GM10248 (cell line): ENCODE measurements at regions of chr1 and their contacts with region 1.

Region 1: GRCh38 chr1:154863315-154864174 is 6.5 kb downstream of the KCNN3 start:
- DNase-seq: peak; percentile 73
- CTCF ChIP-seq: peak; percentile 80

Region 2: DNA sequence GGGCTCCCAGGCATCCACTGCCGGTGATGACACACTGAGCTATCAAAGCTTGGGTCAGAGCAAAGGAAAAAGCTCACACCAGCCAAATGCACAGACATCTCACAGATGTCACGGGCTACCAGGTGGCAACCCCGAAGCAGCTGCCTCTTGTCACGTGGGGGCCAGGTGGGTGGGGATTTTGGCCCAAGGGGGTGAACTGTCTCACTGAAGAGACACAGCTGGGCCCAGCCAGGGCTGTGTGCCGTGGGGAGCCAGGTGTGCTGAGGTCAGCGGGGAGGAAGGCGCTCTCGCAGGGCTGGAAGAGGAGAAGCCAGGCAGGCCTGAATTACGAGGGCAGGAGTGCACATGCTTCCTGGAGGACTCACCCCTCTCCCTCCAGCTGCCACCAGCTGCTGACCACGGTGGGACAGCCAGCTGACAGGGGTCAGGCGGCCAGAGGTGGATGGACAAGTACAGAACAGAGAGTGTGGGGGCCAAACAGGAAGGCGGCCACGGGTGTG is 25.8 kb before region 1 on chr1:
- CTCF ChIA-PET with region 1: interaction called, 11 read pairs
- POLR2A ChIA-PET with region 1: interaction called, 3 read pairs
- DNase-seq: peak; percentile 70
- CTCF ChIP-seq: no peak

Region 3: DNA sequence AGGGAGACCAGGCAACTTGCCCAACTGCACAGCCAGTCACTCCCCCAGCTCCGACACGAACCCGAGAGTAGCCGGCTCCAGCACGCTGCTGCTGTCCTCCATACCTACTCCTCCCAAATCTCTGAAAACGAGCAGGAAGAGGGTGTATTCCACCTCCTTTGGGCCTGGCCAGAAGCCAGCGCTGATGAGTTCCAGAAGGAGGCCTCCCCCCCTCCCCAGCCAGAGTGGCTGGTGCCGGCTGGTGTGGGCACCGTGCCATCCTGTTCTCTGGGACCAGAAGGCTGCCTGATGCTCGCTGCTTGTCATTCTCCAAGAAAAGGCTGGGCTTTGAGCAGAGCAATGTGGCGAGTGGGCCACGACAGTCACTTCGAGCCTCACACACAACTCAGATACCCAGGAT is 15.7 kb before region 1 on chr1:
- CTCF ChIA-PET with region 1: interaction called, 27 read pairs
- POLR2A ChIA-PET with region 1: interaction called, 4 read pairs
- DNase-seq: no peak
- CTCF ChIP-seq: no peak

Region 4: DNA sequence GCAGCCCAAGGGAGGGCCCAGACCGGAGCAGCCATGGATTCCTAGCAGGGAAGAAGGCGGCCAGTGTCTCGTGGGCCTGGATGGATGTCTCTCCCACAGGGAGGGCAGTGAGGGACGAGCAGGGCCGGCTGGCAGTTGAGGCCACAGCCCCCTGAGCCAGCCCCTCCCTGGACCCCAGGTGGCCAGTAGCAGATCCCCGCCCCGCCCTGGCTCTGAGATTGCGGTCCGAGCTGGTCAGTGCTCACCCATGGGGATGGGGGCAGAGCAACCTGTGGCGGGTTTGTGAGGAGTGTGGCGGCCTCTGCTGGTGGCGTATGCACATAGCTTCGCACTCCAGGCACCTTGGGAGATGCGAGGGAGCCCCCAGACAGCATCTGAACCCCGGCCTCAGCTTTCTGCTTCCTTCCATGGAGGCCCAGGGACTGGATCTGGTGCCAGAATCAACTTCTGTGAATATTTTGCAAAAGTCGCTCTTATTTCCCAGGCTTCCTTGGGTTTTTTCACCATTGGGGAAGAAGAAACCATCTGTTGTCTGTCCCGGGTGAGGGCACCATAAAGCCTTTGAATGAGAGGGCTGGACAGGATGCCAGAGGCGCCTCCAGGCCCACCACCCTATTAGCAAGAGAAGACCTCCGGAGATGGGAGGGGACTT is 15.0 kb after region 1 on chr1:
- CTCF ChIA-PET with region 1: interaction called, 51 read pairs
- POLR2A ChIA-PET with region 1: no interaction called
- DNase-seq: peak; percentile 84
- CTCF ChIP-seq: peak; percentile 88